B cell (primary cell): ENCODE measurements at regions of chr19 and their contacts with region 1.

Region 1: DNA sequence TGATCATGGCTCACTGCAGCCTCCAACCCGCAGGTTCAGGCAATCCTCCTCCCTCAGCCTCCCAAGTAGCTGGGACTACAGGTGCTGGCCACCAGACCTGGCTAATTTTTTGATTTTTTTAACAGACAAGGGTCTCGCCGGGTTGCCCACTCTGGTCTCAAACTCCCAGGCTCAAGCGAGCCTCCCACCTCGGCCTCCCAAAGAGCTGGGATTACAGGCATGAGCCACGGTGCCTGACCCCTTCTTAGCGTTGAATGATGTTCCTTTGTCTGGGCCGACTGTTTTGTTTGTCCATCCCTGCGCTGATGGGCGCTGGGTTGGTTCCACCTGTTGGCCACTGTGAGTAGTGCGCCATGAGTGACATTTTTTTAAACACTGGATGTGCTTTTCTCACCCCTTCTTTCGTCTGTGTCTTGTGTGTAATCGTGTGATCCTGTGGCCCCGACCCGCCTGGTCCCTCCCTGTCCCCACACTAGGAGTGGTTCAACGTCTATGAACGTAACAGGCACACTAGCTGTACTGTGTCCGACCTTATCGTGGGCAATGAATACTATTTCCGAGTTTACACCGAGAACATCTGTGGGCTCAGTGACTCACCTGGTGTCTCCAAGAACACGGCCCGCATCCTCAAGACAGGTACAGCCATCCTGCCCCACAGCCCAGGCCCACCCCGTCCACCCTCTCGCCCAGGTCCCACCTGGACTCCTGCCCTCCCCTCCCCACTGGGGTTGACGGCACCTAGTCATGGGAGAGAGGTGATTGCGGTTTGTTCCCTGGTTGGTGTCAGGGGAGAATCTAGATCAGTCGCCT is 15.0 kb upstream of the EMC10 start:
- DNase-seq: peak; percentile 87
- ATAC-seq: peak; percentile 70
- H3K4me3 ChIP-seq: no peak overlapping the region
- H3K4me3 Mint-ChIP-seq: peak overlapping the region; percentile 54
- H3K27ac ChIP-seq: peak overlapping the region; percentile 79 to 84
- H3K27ac Mint-ChIP-seq: peak overlapping the region; percentile 74
- H3K4me1 ChIP-seq: peaks cover 21 to 26% of the 10 kb centered on the region in 2 donors
- H3K4me1 Mint-ChIP-seq: peaks cover 18% of the 10 kb centered on the region
- H3K27me3 ChIP-seq: no peaks in the 10 kb centered on the region
- H3K27me3 Mint-ChIP-seq: no peaks in the 10 kb centered on the region
- CTCF ChIP-seq: peak; percentile 93

Region 2: GRCh38 chr19:50368649-50369570 is 92.4 kb before region 1 on chr19:
- CTCF ChIA-PET with region 1: interaction called, 131 read pairs
- POLR2A ChIA-PET with region 1: interaction called, 10 read pairs
- intact Hi-C with region 1: loop called (anchors 1 kb)
- DNase-seq: peak; percentile 88
- ATAC-seq: peak; percentile 84
- H3K4me3 ChIP-seq: peak overlapping the region; percentile 67 to 80 (median 69)
- H3K4me3 Mint-ChIP-seq: peak overlapping the region; percentile 99
- H3K27ac ChIP-seq: peak overlapping the region; percentile 51 to 74
- H3K27ac Mint-ChIP-seq: peak overlapping the region; percentile 94
- H3K4me1 ChIP-seq: peaks cover 24 to 41% of the 10 kb centered on the region in 2 donors
- H3K4me1 Mint-ChIP-seq: peaks cover 30% of the 10 kb centered on the region
- H3K27me3 ChIP-seq: no peaks in the 10 kb centered on the region
- H3K27me3 Mint-ChIP-seq: no peaks in the 10 kb centered on the region
- CTCF ChIP-seq: peak; percentile 83

Region 3: DNA sequence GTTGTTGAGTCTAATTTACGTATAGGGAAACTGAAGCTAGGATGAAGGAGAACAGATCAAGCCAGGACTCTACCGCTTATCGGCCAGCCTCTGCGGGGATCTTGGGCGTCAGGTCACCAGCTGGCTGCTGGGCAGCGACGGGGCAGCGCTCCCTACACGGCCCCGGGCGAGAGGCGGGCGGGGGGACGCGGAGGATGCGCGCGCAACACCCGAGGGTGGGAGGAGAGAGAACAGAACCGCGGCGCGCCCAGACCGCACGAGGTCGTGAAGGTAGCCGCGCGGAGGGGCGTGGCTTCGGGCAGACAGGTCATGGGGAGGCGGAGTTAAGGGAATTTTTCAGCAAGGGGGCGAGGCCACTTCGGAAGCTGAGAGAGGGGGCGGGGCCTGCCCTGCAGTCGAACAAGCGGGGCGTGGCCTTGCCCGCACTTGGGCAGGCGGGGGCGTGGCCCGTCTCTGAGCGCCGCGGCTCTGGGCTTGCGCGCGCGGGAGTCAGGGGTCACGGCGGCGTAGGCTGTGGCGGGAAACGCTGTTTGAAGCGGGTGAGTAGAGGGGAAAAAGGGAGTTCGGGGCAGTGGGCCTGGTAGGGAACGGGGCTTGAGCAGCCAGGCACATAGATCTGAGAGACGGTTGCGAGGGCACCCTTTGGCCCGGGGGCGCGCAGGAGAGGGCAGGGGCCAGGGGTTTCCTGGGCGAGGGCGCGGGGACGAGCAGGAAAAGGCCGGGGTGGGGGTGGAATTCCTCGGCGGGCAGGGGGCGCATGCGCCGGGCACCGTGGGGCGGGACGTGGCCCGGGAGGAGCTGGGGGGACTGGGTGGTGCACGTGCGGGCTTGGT is 77.2 kb before region 1 on chr19 and contains the start of gene POLD1:
- CTCF ChIA-PET with region 1: interaction called, 15 read pairs
- POLR2A ChIA-PET with region 1: interaction called, 8 read pairs
- intact Hi-C with region 1: loop called (anchors 1 kb)
- DNase-seq: peak; percentile 100
- ATAC-seq: peak; percentile 96
- H3K4me3 ChIP-seq: peak within 1 kb of the TSS; percentile 59 to 92 (median 67)
- H3K4me3 Mint-ChIP-seq: peak within 1 kb of the TSS; percentile 94
- H3K27ac ChIP-seq: peak within 1 kb of the TSS; percentile 64 to 73
- H3K27ac Mint-ChIP-seq: peak within 1 kb of the TSS; percentile 92
- H3K4me1 ChIP-seq: peaks cover 12 to 18% of the 10 kb centered on the region in 2 donors
- H3K4me1 Mint-ChIP-seq: peaks cover 31% of the 10 kb centered on the region
- H3K27me3 ChIP-seq: no peaks in the 10 kb centered on the region
- H3K27me3 Mint-ChIP-seq: no peaks in the 10 kb centered on the region
- CTCF ChIP-seq: no peak
- total RNA-seq, gene POLD1: 43.6 and 52.4 TPM in 2 replicates

Region 4: DNA sequence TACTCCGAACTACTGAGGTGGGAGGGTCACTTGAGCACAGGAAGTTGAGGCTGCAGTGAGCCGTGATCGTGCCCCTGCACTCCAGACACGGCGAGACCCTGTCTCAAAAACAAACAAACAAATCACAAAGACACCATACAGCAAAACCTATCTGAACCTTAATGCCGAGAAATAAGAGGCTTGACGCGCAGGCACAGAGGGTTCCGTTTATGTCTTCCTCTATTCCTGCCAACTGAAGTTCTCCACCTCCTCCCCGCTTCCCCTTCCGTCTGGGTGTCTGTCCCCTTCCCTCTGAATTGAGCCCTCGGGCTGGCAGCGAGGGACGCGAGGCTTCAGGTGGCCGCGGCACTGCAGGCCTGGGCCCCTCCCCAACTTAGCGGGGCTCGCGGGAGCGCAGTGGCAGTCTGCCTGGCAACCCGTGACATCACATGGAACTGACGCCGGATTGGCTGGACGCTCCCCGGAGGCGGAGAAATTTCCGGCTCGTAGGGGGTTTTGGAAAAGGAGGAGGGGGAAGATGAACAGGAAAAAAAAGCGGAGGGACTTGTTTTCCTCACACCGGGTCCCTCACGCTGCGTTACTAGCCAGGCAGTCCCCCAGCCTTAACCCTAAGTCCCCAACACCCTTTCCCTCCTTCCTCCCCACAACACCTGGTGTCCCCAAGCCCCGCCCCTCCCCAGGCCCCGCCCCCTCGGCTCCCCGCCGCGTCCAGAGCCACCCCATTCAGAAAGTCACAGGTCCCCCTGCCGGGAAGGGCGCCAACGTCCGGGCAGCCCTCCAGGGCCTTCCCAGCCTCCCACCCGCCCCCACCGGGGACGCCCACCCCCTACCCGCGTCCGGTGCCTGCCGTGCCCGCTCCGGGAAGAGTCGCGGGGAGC is 29.7 kb before region 1 on chr19:
- CTCF ChIA-PET with region 1: interaction called, 8 read pairs
- POLR2A ChIA-PET with region 1: interaction called, 15 read pairs
- intact Hi-C with region 1: loop called (anchors 1 kb)
- DNase-seq: peak; percentile 96
- ATAC-seq: peak; percentile 65
- H3K4me3 ChIP-seq: peak overlapping the region; percentile 35 to 66 (median 61)
- H3K4me3 Mint-ChIP-seq: peak overlapping the region; percentile 97
- H3K27ac ChIP-seq: peak overlapping the region; percentile 97 to 99
- H3K27ac Mint-ChIP-seq: peak overlapping the region; percentile 99
- H3K4me1 ChIP-seq: peaks cover 70 to 93% of the 10 kb centered on the region in 2 donors
- H3K4me1 Mint-ChIP-seq: peaks cover 84% of the 10 kb centered on the region
- H3K27me3 ChIP-seq: no peaks in the 10 kb centered on the region
- H3K27me3 Mint-ChIP-seq: no peaks in the 10 kb centered on the region
- CTCF ChIP-seq: no peak